ENCODE measurements at regions of chr11 and their contacts with region 1.

Region 1: DNA sequence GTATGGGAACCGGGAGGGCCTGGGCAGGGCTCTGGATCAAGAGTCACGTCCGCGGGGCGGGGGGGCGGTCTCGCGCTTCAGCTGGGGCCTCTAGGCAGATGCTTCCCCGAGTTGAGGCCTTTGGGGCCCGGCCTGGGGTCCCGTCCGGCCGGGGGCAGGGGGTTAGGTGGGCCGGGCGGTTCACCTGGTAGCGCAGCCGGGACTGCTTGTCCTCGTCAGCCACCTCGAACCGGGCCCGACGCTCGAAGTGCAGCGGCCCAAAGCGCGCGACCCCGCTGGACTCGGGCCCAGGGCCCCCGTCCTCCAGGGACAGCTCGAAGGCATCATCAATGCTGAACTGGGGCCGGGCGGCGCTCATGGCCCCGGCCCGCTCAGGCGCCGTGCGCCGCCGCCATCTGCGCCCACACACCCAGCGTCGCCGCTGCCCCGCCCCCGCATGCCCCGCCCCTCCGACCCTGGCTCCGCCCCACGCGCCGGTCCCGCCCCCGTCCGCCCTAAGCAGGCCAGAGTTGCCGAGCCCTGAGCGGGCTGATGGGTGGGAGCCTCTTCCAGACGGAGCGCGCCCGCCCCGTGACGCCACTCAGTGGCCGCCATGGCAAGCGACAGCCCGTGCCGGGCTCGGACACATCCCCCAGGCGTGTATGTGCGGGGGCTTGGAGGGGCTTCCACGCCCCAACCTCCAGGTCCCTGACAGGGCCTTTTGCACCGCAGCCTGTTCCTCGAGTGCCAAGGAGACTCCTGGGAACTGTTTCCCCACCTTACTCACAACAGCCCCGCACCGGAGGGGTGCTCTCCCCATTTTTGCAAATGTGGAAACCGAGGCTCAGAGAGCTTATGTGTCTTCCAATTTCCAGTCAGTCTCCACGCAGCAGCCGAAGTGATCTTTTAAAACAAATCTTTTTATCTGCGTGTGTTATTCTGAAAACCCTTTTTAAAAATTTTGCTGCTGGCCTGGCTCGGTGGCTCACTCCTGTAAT is at the start of gene TMEM134:
- DNase-seq: peak; percentile 89 to 99 (median 94)

Region 2: DNA sequence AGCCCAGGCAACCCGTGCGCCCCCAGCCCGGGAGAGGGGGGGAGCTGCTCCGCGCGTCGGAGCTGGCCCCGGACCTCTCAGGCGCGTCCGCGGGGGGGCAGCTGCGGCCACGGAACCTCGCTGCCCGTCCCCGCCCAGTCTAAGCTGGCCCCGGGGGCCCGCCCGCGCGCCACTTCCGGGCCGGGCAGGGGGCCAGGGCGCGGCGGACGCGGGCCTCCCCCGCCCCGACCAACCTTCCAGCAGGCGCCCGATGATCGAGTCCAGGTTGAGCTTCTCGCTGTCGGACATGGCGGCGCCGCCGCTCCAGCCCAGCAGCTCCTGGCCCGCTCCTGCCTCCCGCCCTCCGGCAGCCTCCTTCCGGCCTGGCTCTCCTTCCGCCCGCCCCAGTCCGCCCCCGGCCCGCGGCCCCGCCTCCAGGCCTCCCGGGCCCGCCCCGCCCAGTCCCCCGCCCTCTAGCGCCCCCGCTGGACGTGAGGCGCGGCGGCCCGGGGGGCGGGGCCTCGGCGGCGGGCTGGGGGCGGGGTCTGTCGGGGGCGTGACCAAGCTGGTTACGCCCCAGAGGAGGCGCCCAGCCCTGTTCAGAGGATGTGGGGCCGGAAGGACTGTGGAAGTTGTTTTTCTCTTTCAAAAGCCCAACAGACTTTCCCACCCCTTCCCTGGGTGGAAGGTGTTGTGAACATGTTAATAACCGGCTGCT is 67.5 kb before region 1 on chr11 and contains the start of gene PPP1CA:
- intact Hi-C with region 1: loop called (anchors 1 kb)
- DNase-seq: peak; percentile 82 to 99 (median 90)

Region 3: GRCh38 chr11:67433536-67434394 is 35.4 kb before region 1 on chr11:
- intact Hi-C with region 1: loop called (anchors 5 kb)
- DNase-seq: no peak

Region 4: GRCh38 chr11:67482825-67483798 is 14.0 kb after region 1 on chr11 and contains the start of gene AIP:
- intact Hi-C with region 1: loop called (anchors 2 kb)
- DNase-seq: peak; percentile 92 to 99 (median 96)

Region 5: GRCh38 chr11:67494371-67495287 is 25.5 kb after region 1 on chr11:
- intact Hi-C with region 1: no loop called
- DNase-seq: peak in 1 of 10 donors; percentile 73

Measured in posterior cingulate gyrus (tissue), 11 donors.